ENCODE measurements at regions of chr5 and their contacts with region 1.

Region 1: DNA sequence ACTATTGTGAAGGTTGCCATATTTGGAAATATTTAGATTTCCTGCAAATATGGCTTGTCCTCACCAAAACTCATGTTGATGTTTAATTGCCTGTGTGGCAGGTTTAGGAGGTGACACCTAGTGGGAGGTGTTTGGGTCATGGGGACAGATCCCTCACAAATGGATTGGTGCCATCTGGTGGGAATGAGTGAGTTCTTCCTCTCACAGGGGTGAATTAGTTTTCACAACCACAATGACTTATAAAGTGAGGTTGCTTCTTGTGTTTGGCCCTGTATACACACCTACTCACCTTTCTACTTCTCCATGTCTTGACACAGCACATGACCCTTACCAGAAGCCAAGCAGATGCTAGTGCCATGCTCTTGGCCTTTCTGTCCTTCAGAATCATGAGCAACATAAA is 41.1 kb downstream of the ISOC1 start:
- DNase-seq: no peak
- ATAC-seq: no peak

Region 2: DNA sequence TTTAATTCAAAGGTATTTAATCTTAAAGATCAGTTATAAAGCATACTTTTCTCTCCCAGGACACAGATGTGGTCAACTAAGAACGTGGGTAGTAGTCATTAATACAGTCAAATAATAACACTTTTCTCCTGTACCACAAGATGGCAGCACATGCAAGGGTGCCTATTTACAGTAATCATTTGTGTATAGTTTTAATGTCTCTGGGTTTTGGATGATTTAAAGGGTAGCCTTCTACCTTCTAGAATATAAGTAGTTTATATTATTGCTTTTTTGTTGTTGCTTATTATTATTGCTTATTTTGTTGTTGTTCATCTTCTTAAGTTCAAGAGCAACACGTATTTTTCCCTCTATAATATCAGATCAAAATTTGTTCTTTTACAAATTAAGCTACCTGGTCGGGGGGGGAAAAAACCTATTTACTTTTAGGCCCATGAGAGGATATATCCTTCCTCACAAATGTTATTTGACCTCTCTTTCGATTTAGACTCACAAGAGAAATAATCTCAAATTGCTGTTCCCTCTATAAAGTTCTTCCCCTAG is 230.0 kb before region 1 on chr5:
- intact Hi-C with region 1: loop called in 1 of 2 experiments (anchors 10 kb)
- DNase-seq: no peak
- ATAC-seq: peak; percentile 77 to 78

Measured in left cardiac atrium (tissue), 4 donors.